CD4-positive, alpha-beta memory T cell (primary cell): ENCODE measurements at regions of chr1 and their contacts with region 1.

Region 1: GRCh38 chr1:7961216-7962015 is at the start of gene PARK7:
- DNase-seq: peak; percentile 99 to 100 (median 100)
- H3K4me3 ChIP-seq: peak within 1 kb of the TSS; percentile 86 to 97
- H3K4me3 Mint-ChIP-seq: peak within 1 kb of the TSS; percentile 97 to 100 (median 98)
- H3K27ac ChIP-seq: peak within 1 kb of the TSS; percentile 94
- H3K27ac Mint-ChIP-seq: peak within 1 kb of the TSS; percentile 97 to 100 (median 99)
- H3K4me1 ChIP-seq: peaks cover 62% of the 10 kb centered on the region
- H3K4me1 Mint-ChIP-seq: peaks cover 33 to 72% (median 57%) of the 10 kb centered on the region in 4 donors
- H3K27me3 ChIP-seq: no peaks in the 10 kb centered on the region
- H3K27me3 Mint-ChIP-seq: no peaks in the 10 kb centered on the region
- total RNA-seq, gene PARK7: 112 to 122 TPM

Region 2: GRCh38 chr1:7783826-7784491 is 177.5 kb before region 1 on chr1 and contains the start of gene PER3:
- CTCF ChIA-PET with region 1: no interaction called
- POLR2A ChIA-PET with region 1: interaction called, 3 read pairs
- intact Hi-C with region 1: loop called (anchors 1 kb)
- DNase-seq: peak; percentile 89 to 97 (median 94)
- H3K4me3 ChIP-seq: peak within 1 kb of the TSS in 1 of 2 donors; percentile 53
- H3K4me3 Mint-ChIP-seq: peak within 1 kb of the TSS; percentile 72 to 87 (median 82)
- H3K27ac ChIP-seq: peak within 1 kb of the TSS; percentile 86
- H3K27ac Mint-ChIP-seq: peak within 1 kb of the TSS; percentile 70 to 88 (median 83)
- H3K4me1 ChIP-seq: peaks cover 28% of the 10 kb centered on the region
- H3K4me1 Mint-ChIP-seq: peaks cover 20 to 39% (median 27%) of the 10 kb centered on the region in 4 donors
- H3K27me3 ChIP-seq: no peaks in the 10 kb centered on the region
- H3K27me3 Mint-ChIP-seq: no peaks in the 10 kb centered on the region
- total RNA-seq, gene PER3: 7.4 to 7.9 TPM

Region 3: GRCh38 chr1:7948960-7949359 is 12.5 kb before region 1 on chr1:
- CTCF ChIA-PET with region 1: no interaction called
- POLR2A ChIA-PET with region 1: interaction called, 12 read pairs
- intact Hi-C with region 1: loop called (anchors 1 kb)
- DNase-seq: peak; percentile 62 to 79 (median 69)
- H3K4me3 ChIP-seq: no peak overlapping the region
- H3K4me3 Mint-ChIP-seq: peak overlapping the region in 7 of 8 donors; percentile 3 to 47 (median 29)
- H3K27ac ChIP-seq: no peak overlapping the region
- H3K27ac Mint-ChIP-seq: peak overlapping the region in 6 of 7 donors; percentile 25 to 73 (median 50)
- H3K4me1 ChIP-seq: peaks cover 22% of the 10 kb centered on the region
- H3K4me1 Mint-ChIP-seq: peaks cover 20 to 38% (median 24%) of the 10 kb centered on the region in 4 donors
- H3K27me3 ChIP-seq: no peaks in the 10 kb centered on the region
- H3K27me3 Mint-ChIP-seq: no peaks in the 10 kb centered on the region

Region 4: DNA sequence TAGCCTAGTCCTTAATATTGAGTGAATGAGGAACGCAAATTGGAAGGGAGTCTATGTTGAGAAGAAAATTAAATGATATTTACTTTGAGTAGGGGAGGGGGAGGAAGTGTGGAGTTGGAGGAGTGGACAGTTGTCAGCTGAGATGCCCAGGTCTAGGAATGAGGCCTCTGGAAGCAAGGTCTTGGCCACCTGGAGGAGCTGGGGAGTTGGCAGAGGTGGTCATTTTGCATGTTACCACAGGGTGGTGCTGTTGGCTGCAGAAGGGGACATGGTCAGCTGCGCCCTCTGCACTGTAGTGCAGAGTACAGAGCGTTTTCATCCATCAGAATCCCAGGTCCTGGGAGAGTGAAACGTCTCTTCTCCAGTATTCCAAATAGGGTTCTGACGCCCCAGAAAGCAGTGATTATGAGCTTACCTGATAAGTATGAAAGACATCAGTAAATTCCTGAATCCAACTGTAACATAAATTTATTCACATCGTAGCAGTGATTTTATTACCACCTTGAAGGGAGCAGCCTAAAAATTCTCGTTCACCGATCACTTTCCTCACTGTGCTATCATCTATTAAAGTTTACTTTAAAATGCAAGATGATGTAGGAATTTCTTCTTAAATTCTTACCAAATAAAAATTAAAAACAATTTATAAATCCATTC is 13.9 kb after region 1 on chr1:
- CTCF ChIA-PET with region 1: interaction called, 13 read pairs
- POLR2A ChIA-PET with region 1: interaction called, 10 read pairs
- intact Hi-C with region 1: no loop called
- DNase-seq: peak in 1 of 5 donors; percentile 20
- H3K4me3 ChIP-seq: no peak overlapping the region
- H3K4me3 Mint-ChIP-seq: no peak overlapping the region
- H3K27ac ChIP-seq: no peak overlapping the region
- H3K27ac Mint-ChIP-seq: no peak overlapping the region
- H3K4me1 ChIP-seq: no peaks in the 10 kb centered on the region
- H3K4me1 Mint-ChIP-seq: peaks cover 0 to 8% (median 6%) of the 10 kb centered on the region in 4 donors
- H3K27me3 ChIP-seq: no peaks in the 10 kb centered on the region
- H3K27me3 Mint-ChIP-seq: no peaks in the 10 kb centered on the region